Heart left ventricle (tissue), 16 donors: ENCODE measurements at regions of chr1 and their contacts with region 1.

Region 1: GRCh38 chr1:43238085-43238484 is 31.7 kb upstream of the TMEM125 start:
- DNase-seq: peak in 4 of 5 donors; percentile 66 to 79 (median 74)
- ATAC-seq: peak; percentile 68 to 89 (median 78)
- H3K4me3 ChIP-seq: no peak overlapping the region
- H3K27ac ChIP-seq: peak overlapping the region in 9 of 12 donors; percentile 8 to 64 (median 41)
- H3K4me1 ChIP-seq: peaks cover 5 to 54% (median 13%) of the 10 kb centered on the region in 12 donors
- H3K27me3 ChIP-seq: no peaks in the 10 kb centered on the region
- CTCF ChIP-seq: peak; percentile 53 to 86 (median 78)
- POLR2A ChIP-seq: no peak

Region 2: DNA sequence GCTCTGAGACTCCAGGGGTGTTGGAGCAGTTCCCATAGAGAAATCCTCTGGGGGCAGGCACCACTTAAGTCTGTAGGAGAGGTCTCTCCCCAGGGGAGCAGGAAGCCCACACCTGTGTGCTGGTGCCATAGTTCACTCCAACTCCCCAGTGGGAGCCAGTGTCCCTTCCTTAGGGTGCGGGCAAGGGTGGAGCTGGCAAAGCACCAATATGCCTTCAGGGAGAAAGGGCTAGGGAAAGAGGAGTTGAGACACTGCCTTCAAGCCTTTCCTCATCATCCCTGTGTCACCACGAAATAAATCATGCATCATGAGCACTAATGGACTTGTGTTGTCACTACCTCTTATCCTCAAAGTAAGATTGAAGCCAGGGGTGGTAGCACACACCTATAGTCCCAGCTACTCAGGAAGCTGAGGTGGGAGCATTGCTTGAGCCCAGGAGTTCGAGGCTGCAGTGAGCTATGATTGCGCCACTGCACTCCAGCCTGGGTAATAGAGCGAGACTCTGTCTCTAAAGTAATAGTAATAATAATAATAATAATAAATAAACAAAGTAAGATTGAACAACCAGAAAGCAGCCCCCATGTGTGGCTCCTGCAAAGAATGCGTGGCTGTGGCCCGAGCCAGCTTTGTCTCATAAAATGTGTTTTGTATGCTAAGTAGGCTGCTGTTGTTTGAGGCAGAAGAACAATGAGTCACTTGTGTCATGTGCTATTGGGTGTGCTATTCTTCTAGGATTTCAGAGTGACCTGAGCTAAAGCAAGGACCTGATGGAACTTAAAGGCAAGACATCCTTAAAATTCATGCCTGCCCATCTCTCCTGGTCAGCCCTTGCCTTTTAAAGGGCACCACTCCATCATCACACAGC is 56.0 kb after region 1 on chr1:
- intact Hi-C with region 1: loop called in 2 of 10 experiments (anchors 2 to 5 kb)
- DNase-seq: no peak
- ATAC-seq: peak in 3 of 4 donors; percentile 29 to 66 (median 51)
- H3K4me3 ChIP-seq: no peak overlapping the region
- H3K27ac ChIP-seq: peak overlapping the region; percentile 60 to 89 (median 76)
- H3K4me1 ChIP-seq: peaks cover 4 to 49% (median 27%) of the 10 kb centered on the region in 12 donors
- H3K27me3 ChIP-seq: no peaks in the 10 kb centered on the region
- CTCF ChIP-seq: no peak
- POLR2A ChIP-seq: peak in 1 of 2 donors; percentile 15

Region 3: DNA sequence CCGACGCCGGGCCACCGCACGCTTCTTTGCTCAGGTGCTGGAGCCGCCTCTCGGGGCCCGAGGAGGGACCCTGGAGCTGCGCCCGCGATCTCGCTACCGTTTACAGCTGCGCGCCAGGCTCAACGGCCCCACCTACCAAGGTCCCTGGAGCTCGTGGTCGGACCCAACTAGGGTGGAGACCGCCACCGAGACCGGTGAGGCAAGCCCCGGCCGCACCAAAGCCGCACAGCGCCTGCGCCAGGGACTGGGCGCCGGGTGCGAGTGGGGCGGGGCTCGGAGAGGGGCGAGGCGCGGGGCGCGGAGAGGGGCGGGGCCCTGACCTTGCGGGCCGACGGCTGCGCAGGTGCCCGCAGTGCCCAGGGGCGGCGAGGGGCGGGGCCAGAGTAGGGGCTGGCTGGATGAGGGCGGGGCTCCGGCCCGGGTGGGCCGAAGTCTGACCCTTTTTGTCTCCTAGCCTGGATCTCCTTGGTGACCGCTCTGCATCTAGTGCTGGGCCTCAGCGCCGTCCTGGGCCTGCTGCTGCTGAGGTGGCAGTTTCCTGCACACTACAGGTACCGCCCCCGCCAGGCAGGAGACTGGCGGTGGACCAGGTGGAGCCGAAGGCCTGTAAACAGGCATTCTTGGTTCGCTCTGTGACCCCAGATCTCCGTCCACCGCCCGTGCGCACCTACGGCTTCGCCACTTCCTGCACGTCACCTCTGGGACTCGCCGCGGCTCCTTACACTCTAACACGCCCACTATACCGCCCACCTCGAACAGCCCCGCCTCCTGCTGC is 110.9 kb after region 1 on chr1:
- intact Hi-C with region 1: loop called in 1 of 10 experiments (anchors 5 kb)
- DNase-seq: peak; percentile 85 to 90 (median 90)
- ATAC-seq: peak; percentile 86 to 92 (median 89)
- H3K4me3 ChIP-seq: peak overlapping the region; percentile 34 to 90 (median 60)
- H3K27ac ChIP-seq: peak overlapping the region; percentile 78 to 100 (median 96)
- H3K4me1 ChIP-seq: peaks cover 0 to 54% (median 25%) of the 10 kb centered on the region in 12 donors
- H3K27me3 ChIP-seq: no peaks in the 10 kb centered on the region
- CTCF ChIP-seq: no peak
- POLR2A ChIP-seq: peak in 1 of 2 donors; percentile 46

Region 4: DNA sequence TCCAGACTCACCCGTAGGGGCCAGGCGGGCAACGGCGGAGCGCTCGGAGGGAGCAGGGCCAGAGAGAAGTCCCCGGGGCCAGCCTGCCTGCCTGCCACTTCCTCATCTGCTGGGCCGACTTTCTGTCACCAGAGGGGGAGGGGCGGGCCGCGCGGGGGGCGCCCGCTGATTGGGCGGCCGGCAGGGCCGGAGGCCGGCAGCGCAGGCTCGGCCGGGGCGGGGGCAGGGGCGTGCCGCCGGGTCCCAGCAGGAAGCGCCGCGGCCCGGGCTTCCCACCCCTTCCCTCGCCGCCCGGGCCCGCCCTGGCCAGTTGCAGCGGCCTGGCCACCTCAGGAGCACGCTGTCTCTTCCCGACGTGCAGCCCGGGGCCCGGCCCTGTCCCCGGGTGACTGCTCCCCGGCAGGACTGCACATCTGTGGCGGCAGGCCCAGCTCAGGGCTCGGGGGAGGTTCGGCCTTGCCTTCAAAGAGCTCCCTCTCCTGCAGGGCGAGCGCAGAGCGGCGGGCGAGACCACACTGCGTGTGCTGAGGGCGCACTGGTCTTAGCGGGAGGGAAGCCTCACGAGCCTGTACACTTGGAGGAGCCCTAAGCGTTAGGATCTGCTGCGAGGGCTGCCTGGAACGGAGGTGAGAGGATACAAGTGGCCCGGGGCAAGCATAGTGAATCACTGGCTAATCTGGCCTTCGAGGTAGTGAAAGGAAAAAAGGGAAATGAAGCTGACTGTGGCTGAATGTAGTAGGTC is 130.0 kb after region 1 on chr1 and contains the start of gene ELOVL1:
- intact Hi-C with region 1: loop called in 4 of 10 experiments (anchors 5 kb)
- DNase-seq: peak; percentile 95 to 97 (median 95)
- ATAC-seq: peak; percentile 86 to 97 (median 94)
- H3K4me3 ChIP-seq: peak within 1 kb of the TSS; percentile 54 to 97 (median 90)
- H3K27ac ChIP-seq: peak within 1 kb of the TSS; percentile 91 to 99 (median 97)
- H3K4me1 ChIP-seq: peaks cover under 1 to 38% (median 28%) of the 10 kb centered on the region in 12 donors
- H3K27me3 ChIP-seq: no peaks in the 10 kb centered on the region
- CTCF ChIP-seq: peak in 5 of 12 donors; percentile 18 to 62 (median 39)
- POLR2A ChIP-seq: peak in 1 of 2 donors; percentile 93
- total RNA-seq, gene ELOVL1: 22.1 to 63.5 (median 33.6) TPM

Region 5: GRCh38 chr1:43389326-43390313 is 151.5 kb after region 1 on chr1 and contains the starts of genes MED8 and SZT2:
- intact Hi-C with region 1: loop called in 5 of 10 experiments (anchors 2 to 10 kb)
- DNase-seq: peak; percentile 95 to 97 (median 96)
- ATAC-seq: peak; percentile 98 to 99 (median 99)
- H3K4me3 ChIP-seq: peak within 1 kb of the TSS; percentile 51 to 98 (median 84)
- H3K27ac ChIP-seq: peak within 1 kb of the TSS; percentile 1 to 89 (median 83)
- H3K4me1 ChIP-seq: peaks cover 13 to 32% (median 26%) of the 10 kb centered on the region in 12 donors
- H3K27me3 ChIP-seq: no peaks in the 10 kb centered on the region
- CTCF ChIP-seq: no peak
- POLR2A ChIP-seq: peak; percentile 15 to 85
- total RNA-seq, gene MED8: 13.7 to 25.4 (median 16.9) TPM
- total RNA-seq, gene SZT2: 19.0 to 39.7 (median 24.4) TPM

Region 6: GRCh38 chr1:43423672-43424550 is 185.8 kb after region 1 on chr1:
- intact Hi-C with region 1: loop called in 2 of 10 experiments (anchors 5 kb)
- DNase-seq: no peak
- ATAC-seq: no peak
- H3K4me3 ChIP-seq: no peak overlapping the region
- H3K27ac ChIP-seq: no peak overlapping the region
- H3K4me1 ChIP-seq: no peaks in the 10 kb centered on the region
- H3K27me3 ChIP-seq: no peaks in the 10 kb centered on the region
- CTCF ChIP-seq: no peak
- POLR2A ChIP-seq: no peak